PC-3 (cell line): ENCODE measurements at regions of chr2 and their contacts with region 1.

Region 1: GRCh38 chr2:234257856-234258561 is 207.5 kb downstream of the SPP2 start:
- DNase-seq: peak; percentile 97
- ATAC-seq: peak; percentile 99
- H3K4me3 ChIP-seq: peak overlapping the region; percentile 22; the same call in 1 of the 2 replicates
- H3K27ac ChIP-seq: peak overlapping the region; percentile 97
- H3K4me1 ChIP-seq: peaks cover 41% of the 10 kb centered on the region
- H3K27me3 ChIP-seq: no peaks in the 10 kb centered on the region
- CTCF ChIP-seq: peak; percentile 80

Region 2: GRCh38 chr2:234060236-234060635 is 197.8 kb before region 1 on chr2:
- CTCF ChIA-PET with region 1: no interaction called
- POLR2A ChIA-PET with region 1: no interaction called
- intact Hi-C with region 1: no loop called
- DNase-seq: no peak
- ATAC-seq: no peak
- H3K4me3 ChIP-seq: no peak overlapping the region
- H3K27ac ChIP-seq: no peak overlapping the region
- H3K4me1 ChIP-seq: 0 out of 2 replicates have a peak, but pooled peaks cover 3% of the 10 kb centered on the region
- H3K27me3 ChIP-seq: no peaks in the 10 kb centered on the region
- CTCF ChIP-seq: no peak

Region 3: DNA sequence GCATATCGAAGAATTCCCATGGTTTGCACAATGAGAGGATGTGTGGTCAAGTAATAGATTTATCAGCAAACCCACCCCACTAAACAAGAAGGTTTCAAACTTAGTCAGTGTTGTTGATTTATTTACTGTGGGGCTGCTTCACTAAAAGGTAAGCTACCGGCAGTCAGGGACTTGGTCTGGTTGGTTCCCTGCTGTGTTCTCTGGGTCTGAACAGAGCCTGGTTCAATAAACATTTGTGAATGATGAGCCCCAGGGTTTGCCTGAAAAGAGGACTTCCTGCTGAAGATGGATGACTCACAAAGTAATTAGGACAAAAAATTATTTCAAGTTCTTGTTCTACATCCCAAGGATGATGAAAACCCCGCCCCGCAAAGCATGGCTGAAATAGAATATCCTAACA is 99.2 kb before region 1 on chr2:
- CTCF ChIA-PET with region 1: no interaction called
- POLR2A ChIA-PET with region 1: no interaction called
- intact Hi-C with region 1: loop called (anchors 5 kb)
- DNase-seq: peak; percentile 73
- ATAC-seq: peak; percentile 95
- H3K4me3 ChIP-seq: no peak overlapping the region
- H3K27ac ChIP-seq: peak overlapping the region; percentile 17; the same call in 1 of the 2 replicates
- H3K4me1 ChIP-seq: peaks cover 30% of the 10 kb centered on the region
- H3K27me3 ChIP-seq: no peaks in the 10 kb centered on the region
- CTCF ChIP-seq: no peak

Region 4: GRCh38 chr2:234363011-234363487 is 105.0 kb after region 1 on chr2:
- CTCF ChIA-PET with region 1: no interaction called
- POLR2A ChIA-PET with region 1: no interaction called
- intact Hi-C with region 1: loop called (anchors 1 kb)
- DNase-seq: peak; percentile 95
- ATAC-seq: peak; percentile 92
- H3K4me3 ChIP-seq: peak overlapping the region; percentile 40
- H3K27ac ChIP-seq: peak overlapping the region; percentile 90
- H3K4me1 ChIP-seq: peaks cover 57% of the 10 kb centered on the region
- H3K27me3 ChIP-seq: no peaks in the 10 kb centered on the region
- CTCF ChIP-seq: no peak